ENCODE measurements at regions of chr10 and their contacts with region 1.

Region 1: GRCh38 chr10:12656518-12657142 is 307.3 kb downstream of the CAMK1D start:
- DNase-seq: no peak
- H3K4me3 Mint-ChIP-seq: no peak overlapping the region
- H3K27ac Mint-ChIP-seq: no peak overlapping the region
- H3K4me1 Mint-ChIP-seq: peaks cover 29% of the 10 kb centered on the region
- H3K27me3 Mint-ChIP-seq: no peaks in the 10 kb centered on the region

Region 2: DNA sequence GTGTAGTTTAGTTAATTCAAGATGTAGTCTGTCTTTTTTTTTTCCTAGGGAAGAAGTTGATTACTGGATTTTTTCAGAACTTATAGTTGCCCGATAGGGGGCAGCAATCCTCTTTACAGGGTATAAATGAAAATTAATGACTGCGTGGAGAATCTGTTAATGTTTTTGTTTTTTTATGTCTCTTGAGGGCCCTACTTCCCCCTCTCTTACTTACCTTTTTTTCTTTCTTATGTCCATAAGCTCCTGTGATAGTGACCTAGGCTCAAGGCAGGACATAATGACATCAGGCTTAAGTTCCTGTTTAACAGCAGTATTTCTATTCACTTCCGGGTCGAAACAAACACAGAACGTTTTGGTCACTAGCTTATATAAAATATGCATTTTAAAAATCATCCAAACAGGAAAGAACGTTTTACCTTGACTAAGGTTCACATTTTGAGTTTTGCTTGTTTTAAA is 441.8 kb before region 1 on chr10:
- CTCF ChIA-PET with region 1: interaction called, 36 read pairs
- POLR2A ChIA-PET with region 1: no interaction called
- intact Hi-C with region 1: no loop called
- DNase-seq: peak; percentile 15
- H3K4me3 Mint-ChIP-seq: peak overlapping the region; percentile 41
- H3K27ac Mint-ChIP-seq: peak overlapping the region; percentile 79
- H3K4me1 Mint-ChIP-seq: peaks cover 16% of the 10 kb centered on the region
- H3K27me3 Mint-ChIP-seq: no peaks in the 10 kb centered on the region

Region 3: GRCh38 chr10:12264204-12264940 is 392.3 kb before region 1 on chr10:
- CTCF ChIA-PET with region 1: interaction called, 79 read pairs
- POLR2A ChIA-PET with region 1: interaction called, 3 read pairs
- intact Hi-C with region 1: loop called (anchors 1 kb)
- DNase-seq: peak; percentile 87
- H3K4me3 Mint-ChIP-seq: peak overlapping the region; percentile 47
- H3K27ac Mint-ChIP-seq: peak overlapping the region; percentile 82
- H3K4me1 Mint-ChIP-seq: peaks cover 19% of the 10 kb centered on the region
- H3K27me3 Mint-ChIP-seq: no peaks in the 10 kb centered on the region

Region 4: GRCh38 chr10:12466704-12467305 is 189.8 kb before region 1 on chr10:
- CTCF ChIA-PET with region 1: interaction called, 5 read pairs
- POLR2A ChIA-PET with region 1: no interaction called
- intact Hi-C with region 1: loop called (anchors 5 kb)
- DNase-seq: no peak
- H3K4me3 Mint-ChIP-seq: no peak overlapping the region
- H3K27ac Mint-ChIP-seq: no peak overlapping the region
- H3K4me1 Mint-ChIP-seq: peaks cover 27% of the 10 kb centered on the region
- H3K27me3 Mint-ChIP-seq: no peaks in the 10 kb centered on the region

Region 5: GRCh38 chr10:12638103-12638502 is 18.5 kb before region 1 on chr10:
- CTCF ChIA-PET with region 1: interaction called, 16 read pairs
- POLR2A ChIA-PET with region 1: no interaction called
- intact Hi-C with region 1: no loop called
- DNase-seq: peak; percentile 60
- H3K4me3 Mint-ChIP-seq: no peak overlapping the region
- H3K27ac Mint-ChIP-seq: no peak overlapping the region
- H3K4me1 Mint-ChIP-seq: peaks cover 40% of the 10 kb centered on the region
- H3K27me3 Mint-ChIP-seq: no peaks in the 10 kb centered on the region

Region 6: GRCh38 chr10:12703813-12704212 is 47.2 kb after region 1 on chr10:
- CTCF ChIA-PET with region 1: interaction called, 31 read pairs
- POLR2A ChIA-PET with region 1: no interaction called
- intact Hi-C with region 1: no loop called
- DNase-seq: no peak
- H3K4me3 Mint-ChIP-seq: no peak overlapping the region
- H3K27ac Mint-ChIP-seq: peak overlapping the region; percentile 81
- H3K4me1 Mint-ChIP-seq: peaks cover 86% of the 10 kb centered on the region
- H3K27me3 Mint-ChIP-seq: no peaks in the 10 kb centered on the region

Measured in activated CD4-positive, alpha-beta memory T cell treated with anti-CD3 and anti-CD28 coated beads for 36 hours (primary cell).